ENCODE measurements at regions of chr15 and their contacts with region 1.

Region 1: DNA sequence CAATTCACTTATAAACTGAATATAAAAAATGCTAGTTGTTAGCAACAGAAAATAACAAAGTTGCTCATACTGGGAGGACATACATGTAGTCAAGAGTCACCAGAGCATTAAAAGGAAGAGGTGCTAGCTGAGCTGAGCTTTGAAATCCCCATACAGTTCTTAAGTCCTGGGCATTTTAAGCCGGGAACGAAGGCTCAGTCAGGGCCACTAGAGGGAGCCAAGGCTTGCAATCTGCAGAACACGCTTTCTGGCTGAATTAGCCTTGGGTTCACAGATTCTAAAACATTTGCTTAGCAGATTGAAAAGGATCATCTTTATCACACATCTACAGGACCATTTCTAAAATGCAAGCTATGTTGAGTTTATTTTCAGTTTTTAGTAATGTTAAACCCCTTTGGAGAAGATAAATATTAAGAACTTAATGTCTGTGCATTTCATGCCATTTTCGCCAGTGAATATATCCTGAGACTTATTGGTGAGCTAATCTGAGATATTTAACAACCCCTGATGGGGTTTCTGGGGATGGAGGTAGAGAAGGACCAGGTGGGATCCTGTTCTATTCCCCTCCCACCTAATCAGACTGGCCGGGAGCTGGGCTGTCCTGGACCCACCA is 26.3 kb upstream of the MNS1 start:
- DNase-seq: peak; percentile 28
- ATAC-seq: peak; percentile 94
- H3K4me3 ChIP-seq: no peak overlapping the region
- H3K27ac ChIP-seq: no peak overlapping the region
- H3K4me1 ChIP-seq: no peaks in the 10 kb centered on the region
- H3K27me3 ChIP-seq: no peaks in the 10 kb centered on the region
- CTCF ChIP-seq: peak; percentile 89 to 94 (median 92)
- EP300 ChIP-seq: no peak
- POLR2A ChIP-seq: no peak
- RAD21 ChIP-seq: peak; percentile 86

Region 2: GRCh38 chr15:56222302-56222701 is 268.9 kb before region 1 on chr15:
- CTCF ChIA-PET with region 1: no interaction called
- POLR2A ChIA-PET with region 1: no interaction called
- RAD21 ChIA-PET with region 1: no interaction called
- SMC1A ChIA-PET with region 1: no interaction called
- in situ Hi-C with region 1: no loop called
- intact Hi-C with region 1: no loop called
- DNase-seq: no peak
- ATAC-seq: no peak
- H3K4me3 ChIP-seq: no peak overlapping the region
- H3K27ac ChIP-seq: no peak overlapping the region
- H3K4me1 ChIP-seq: no peaks in the 10 kb centered on the region
- H3K27me3 ChIP-seq: no peaks in the 10 kb centered on the region
- CTCF ChIP-seq: no peak
- EP300 ChIP-seq: no peak
- POLR2A ChIP-seq: no peak
- RAD21 ChIP-seq: no peak

Region 3: GRCh38 chr15:56307126-56307525 is 184.1 kb before region 1 on chr15:
- CTCF ChIA-PET with region 1: no interaction called
- POLR2A ChIA-PET with region 1: no interaction called
- RAD21 ChIA-PET with region 1: no interaction called
- SMC1A ChIA-PET with region 1: no interaction called
- in situ Hi-C with region 1: no loop called
- intact Hi-C with region 1: no loop called
- DNase-seq: no peak
- ATAC-seq: no peak
- H3K4me3 ChIP-seq: no peak overlapping the region
- H3K27ac ChIP-seq: no peak overlapping the region
- H3K4me1 ChIP-seq: no peaks in the 10 kb centered on the region
- H3K27me3 ChIP-seq: no peaks in the 10 kb centered on the region
- CTCF ChIP-seq: no peak
- EP300 ChIP-seq: no peak
- POLR2A ChIP-seq: no peak
- RAD21 ChIP-seq: no peak

Region 4: GRCh38 chr15:56616529-56616928 is 125.3 kb after region 1 on chr15:
- CTCF ChIA-PET with region 1: no interaction called
- POLR2A ChIA-PET with region 1: no interaction called
- RAD21 ChIA-PET with region 1: no interaction called
- SMC1A ChIA-PET with region 1: no interaction called
- in situ Hi-C with region 1: no loop called
- intact Hi-C with region 1: no loop called
- DNase-seq: no peak
- ATAC-seq: no peak
- H3K4me3 ChIP-seq: no peak overlapping the region
- H3K27ac ChIP-seq: no peak overlapping the region
- H3K4me1 ChIP-seq: no peaks in the 10 kb centered on the region
- H3K27me3 ChIP-seq: no peaks in the 10 kb centered on the region
- CTCF ChIP-seq: no peak
- EP300 ChIP-seq: no peak
- POLR2A ChIP-seq: no peak
- RAD21 ChIP-seq: no peak

Region 5: DNA sequence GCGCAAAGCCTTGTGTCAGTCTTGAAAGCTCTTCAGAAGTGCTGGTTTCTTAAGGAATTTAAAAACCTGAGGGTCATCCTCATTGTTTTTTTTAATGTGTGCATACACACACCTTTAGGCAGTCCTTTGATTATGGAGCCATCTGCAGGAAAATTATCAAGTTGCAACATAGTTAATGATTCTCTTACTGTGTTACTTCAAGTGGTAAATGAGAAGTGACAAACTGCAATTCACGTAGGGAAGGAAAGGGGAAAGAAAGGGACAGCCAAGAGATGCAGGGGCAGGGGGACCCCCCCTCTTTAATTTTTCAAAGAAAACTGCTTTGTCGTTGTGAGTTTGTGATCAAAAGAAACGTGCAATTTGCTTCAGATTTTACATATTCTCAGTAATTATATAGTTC is 722.6 kb after region 1 on chr15:
- CTCF ChIA-PET with region 1: interaction called, 7 read pairs
- POLR2A ChIA-PET with region 1: no interaction called
- RAD21 ChIA-PET with region 1: interaction called, 5 read pairs
- SMC1A ChIA-PET with region 1: interaction called, 4 read pairs
- in situ Hi-C with region 1: loop called (anchors 10 kb)
- intact Hi-C with region 1: no loop called
- DNase-seq: no peak
- ATAC-seq: peak; percentile 86
- H3K4me3 ChIP-seq: no peak overlapping the region
- H3K27ac ChIP-seq: no peak overlapping the region
- H3K4me1 ChIP-seq: no peaks in the 10 kb centered on the region
- H3K27me3 ChIP-seq: no peaks in the 10 kb centered on the region
- CTCF ChIP-seq: peak; percentile 42 to 67 (median 48); a peak in 5 of 6 replicates
- EP300 ChIP-seq: no peak
- POLR2A ChIP-seq: no peak
- RAD21 ChIP-seq: peak; percentile 83

Region 6: GRCh38 chr15:57541805-57542504 is 1050.7 kb after region 1 on chr15:
- CTCF ChIA-PET with region 1: no interaction called
- POLR2A ChIA-PET with region 1: no interaction called
- RAD21 ChIA-PET with region 1: no interaction called
- SMC1A ChIA-PET with region 1: interaction called, 3 read pairs
- in situ Hi-C with region 1: loop called (anchors 10 kb)
- intact Hi-C with region 1: no loop called
- DNase-seq: no peak
- ATAC-seq: peak; percentile 63
- H3K4me3 ChIP-seq: no peak overlapping the region
- H3K27ac ChIP-seq: no peak overlapping the region
- H3K4me1 ChIP-seq: peaks cover 12% of the 10 kb centered on the region
- H3K27me3 ChIP-seq: peaks cover 0 to 1% of the 10 kb centered on the region in 2 experiments; a peak in 2 of 4 replicates
- CTCF ChIP-seq: peak; percentile 72 to 86 (median 83)
- EP300 ChIP-seq: no peak
- POLR2A ChIP-seq: no peak
- RAD21 ChIP-seq: peak; percentile 39